ENCODE measurements at regions of chr12 and their contacts with region 1.

Region 1: DNA sequence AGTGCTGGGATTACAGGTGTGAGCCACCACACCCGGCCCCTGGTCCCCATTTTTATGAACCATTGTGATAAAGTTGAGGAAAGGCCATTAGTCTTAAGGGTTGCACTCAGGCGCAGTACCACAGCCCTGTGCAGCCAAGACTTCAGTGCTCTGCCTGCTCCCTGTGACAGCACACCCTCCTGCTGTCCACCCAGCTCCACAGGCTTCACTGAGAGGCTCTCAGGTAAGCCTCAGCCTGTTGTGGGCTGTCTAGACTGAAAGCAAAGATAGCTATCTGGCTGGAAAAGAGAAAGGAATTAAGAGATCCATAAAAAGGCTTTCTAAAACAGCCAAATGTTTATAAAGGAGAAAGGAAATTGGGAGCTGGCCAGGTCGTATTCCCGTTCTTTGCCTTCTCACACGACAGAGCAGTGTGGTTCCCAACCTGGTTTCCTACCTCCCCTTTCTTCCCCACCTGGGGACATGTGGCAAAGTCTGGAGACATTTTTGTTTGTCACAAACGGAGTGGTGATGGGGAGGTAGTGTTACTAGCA is 19.1 kb upstream of the DNM1L start:
- DNase-seq: no peak
- H3K4me3 ChIP-seq: no peak overlapping the region
- H3K27ac ChIP-seq: no peak overlapping the region
- H3K4me1 ChIP-seq: no peaks in the 10 kb centered on the region
- H3K27me3 ChIP-seq: no peaks in the 10 kb centered on the region
- CTCF ChIP-seq: no peak

Region 2: GRCh38 chr12:32413412-32413811 is 246.6 kb before region 1 on chr12:
- CTCF ChIA-PET with region 1: no interaction called
- POLR2A ChIA-PET with region 1: no interaction called
- intact Hi-C with region 1: no loop called
- DNase-seq: no peak
- H3K4me3 ChIP-seq: no peak overlapping the region
- H3K27ac ChIP-seq: no peak overlapping the region
- H3K4me1 ChIP-seq: no peaks in the 10 kb centered on the region
- H3K27me3 ChIP-seq: no peaks in the 10 kb centered on the region
- CTCF ChIP-seq: no peak

Region 3: GRCh38 chr12:32671930-32672780 is 12.2 kb after region 1 on chr12:
- CTCF ChIA-PET with region 1: interaction called, 10 read pairs
- POLR2A ChIA-PET with region 1: no interaction called
- intact Hi-C with region 1: no loop called
- DNase-seq: peak; percentile 93
- H3K4me3 ChIP-seq: no peak overlapping the region
- H3K27ac ChIP-seq: peak overlapping the region; percentile 51
- H3K4me1 ChIP-seq: peaks cover 7% of the 10 kb centered on the region
- H3K27me3 ChIP-seq: no peaks in the 10 kb centered on the region
- CTCF ChIP-seq: peak; percentile 77

Region 4: DNA sequence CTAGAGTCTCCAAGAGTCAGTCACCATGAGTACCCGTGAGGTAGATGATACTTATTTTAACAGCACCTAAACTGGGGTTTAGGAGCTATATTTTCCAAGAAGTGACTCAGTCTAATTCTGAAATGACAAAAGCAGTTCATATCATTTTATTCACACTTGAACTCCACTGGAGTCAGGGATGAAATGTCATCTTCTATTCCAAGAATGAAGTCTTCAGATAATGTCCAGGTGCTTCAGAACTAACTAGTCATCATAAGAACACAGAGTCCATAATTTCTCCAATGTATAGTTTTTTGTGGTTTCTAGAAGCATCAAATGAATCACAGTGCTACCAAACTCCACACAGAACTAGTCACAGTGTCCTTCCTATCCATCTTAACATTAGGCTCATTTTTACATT is 32.4 kb after region 1 on chr12:
- CTCF ChIA-PET with region 1: no interaction called
- POLR2A ChIA-PET with region 1: no interaction called
- intact Hi-C with region 1: no loop called
- DNase-seq: no peak
- H3K4me3 ChIP-seq: no peak overlapping the region
- H3K27ac ChIP-seq: no peak overlapping the region
- H3K4me1 ChIP-seq: peaks cover 3% of the 10 kb centered on the region
- H3K27me3 ChIP-seq: no peaks in the 10 kb centered on the region
- CTCF ChIP-seq: no peak

Region 5: DNA sequence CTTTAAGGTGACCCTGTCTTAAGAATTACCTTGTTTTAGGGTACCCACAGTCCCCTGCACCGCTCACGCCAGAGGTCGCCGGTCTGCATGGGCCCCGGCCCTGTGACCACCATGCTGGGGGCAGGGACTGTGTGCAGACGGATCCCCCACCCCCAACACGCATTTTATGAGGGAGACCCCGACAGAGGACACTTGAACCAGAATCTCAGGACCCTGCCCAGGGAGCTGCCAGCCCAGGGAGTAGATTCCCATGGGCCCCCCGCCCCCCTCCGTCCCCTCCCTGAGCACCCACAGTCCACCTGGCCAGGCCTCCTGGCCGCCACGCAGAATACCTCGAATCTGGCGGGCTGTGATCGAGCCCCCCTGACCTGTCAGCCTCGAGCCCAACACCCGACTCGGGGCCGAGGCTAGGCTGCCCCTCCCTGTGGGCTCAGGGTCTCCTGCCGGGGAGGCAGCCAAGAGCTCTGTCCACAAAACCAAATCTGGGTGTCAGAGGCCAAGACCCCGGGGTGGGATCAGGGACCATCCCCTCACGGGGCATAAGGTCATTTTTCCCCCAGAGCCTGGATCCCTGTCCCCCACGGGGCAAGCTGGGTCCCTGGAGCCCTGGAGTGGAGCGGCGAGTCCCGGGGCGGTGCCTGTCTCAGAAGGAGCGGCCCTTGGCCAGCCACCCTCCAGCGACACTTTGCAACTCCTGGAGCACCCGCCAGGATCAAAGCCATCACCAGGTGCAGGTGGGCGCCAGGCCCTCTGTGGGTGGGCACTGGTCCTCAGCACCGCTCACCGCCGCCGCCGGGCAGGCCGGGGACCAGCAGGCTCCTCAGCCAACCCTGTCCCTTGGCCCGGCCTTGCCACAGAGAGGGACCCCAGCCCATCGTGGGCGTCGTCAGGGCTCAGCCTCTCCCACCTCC is 392.4 kb after region 1 on chr12:
- CTCF ChIA-PET with region 1: no interaction called
- POLR2A ChIA-PET with region 1: no interaction called
- intact Hi-C with region 1: no loop called
- DNase-seq: no peak
- H3K4me3 ChIP-seq: no peak overlapping the region
- H3K27ac ChIP-seq: no peak overlapping the region
- H3K4me1 ChIP-seq: no peaks in the 10 kb centered on the region
- H3K27me3 ChIP-seq: peaks cover 8% of the 10 kb centered on the region
- CTCF ChIP-seq: no peak

Measured in A673 (cell line).